Motor neuron (in vitro differentiated cells): ENCODE measurements at regions of chr2 and their contacts with region 1.

Region 1: DNA sequence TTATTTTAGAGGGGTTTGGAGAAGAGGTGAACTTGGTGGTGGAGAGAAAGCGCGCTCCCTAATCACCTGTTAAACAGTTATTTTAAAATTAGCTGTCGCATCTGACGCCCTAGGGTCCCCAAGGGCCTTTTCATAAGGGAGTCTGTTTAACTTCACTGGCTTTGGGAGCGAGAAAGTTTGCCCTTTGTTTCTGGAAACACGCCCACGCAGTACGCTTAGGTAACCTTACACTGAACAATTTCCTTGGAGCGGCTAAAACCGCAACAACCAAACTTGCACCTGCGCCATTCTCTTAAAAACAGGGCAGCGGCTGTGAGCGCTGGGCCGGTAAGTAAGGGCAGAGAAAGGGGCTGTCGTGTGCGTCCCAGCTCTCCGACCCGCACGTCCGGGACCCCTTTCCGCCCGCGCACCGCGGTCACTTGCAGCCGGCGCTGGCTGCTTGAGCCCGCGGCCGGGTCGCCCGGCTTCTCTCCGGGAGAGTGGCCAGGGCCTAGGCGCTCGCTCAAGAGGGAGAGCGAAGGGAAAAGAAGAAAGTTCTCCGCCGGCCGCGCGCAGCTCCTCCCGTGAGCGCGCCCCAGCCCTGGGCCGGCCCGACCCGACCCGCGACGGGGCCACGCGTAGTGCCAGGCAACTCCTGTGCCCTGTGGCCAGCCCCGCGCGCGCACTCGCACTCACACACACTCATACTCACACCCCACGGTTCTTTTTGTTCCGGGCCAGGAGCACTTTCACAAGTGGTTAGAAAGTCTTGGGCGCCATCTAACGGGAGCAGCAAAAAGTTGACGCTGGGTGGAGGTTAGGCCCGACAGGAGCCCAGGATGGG is 19.2 kb downstream of the POU3F3 start:
- ATAC-seq: peak; percentile 81 to 96 (median 86)
- H3K4me3 ChIP-seq: peak overlapping the region; percentile 38 to 84 (median 54)
- H3K27ac ChIP-seq: peak overlapping the region; percentile 32 to 49
- H3K4me1 ChIP-seq: peaks cover 5 to 11% of the 10 kb centered on the region in 2 donors

Region 2: DNA sequence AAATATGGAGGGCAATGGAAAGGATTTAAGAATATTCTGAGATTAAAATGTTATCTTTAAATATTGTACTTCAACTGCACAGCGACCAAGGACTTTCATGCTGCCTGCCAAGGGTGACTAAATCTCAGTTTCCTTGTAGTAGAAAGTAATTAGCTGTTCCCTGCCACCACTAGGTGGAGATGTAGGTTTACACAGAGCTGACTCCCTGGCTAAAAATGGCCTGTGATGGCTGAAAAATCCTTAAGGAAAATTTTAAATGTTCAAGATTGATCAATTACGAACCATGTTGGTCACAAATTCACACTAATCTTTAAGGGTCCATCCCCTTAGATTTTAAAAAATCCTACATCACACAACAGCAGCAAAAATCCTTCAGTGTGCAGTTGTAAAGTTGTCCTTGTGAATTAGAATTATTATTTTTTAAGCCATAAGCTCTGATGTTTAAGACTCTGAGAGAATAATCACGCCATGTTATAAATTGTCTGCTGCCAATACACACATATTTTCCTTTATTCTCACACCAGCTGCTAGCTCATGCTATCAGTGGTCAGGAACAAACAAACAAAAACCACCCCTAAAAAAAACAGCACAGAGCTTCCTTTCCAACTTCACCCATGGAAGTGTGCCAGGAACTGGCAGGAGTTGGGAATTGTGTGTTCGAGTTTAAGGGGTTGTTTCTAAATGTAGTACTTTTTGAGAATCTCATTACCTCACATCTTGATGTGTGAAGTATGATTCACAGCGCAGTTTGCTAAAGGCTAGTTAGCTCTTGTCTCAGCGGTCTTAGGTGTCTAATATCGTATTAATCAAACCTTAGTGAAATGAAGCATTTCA is 1711.4 kb before region 1 on chr2:
- in situ Hi-C with region 1: loop called in 5 of 9 experiments (anchors 25 kb)
- ATAC-seq: peak; percentile 53 to 81 (median 69)
- H3K4me3 ChIP-seq: no peak overlapping the region
- H3K27ac ChIP-seq: no peak overlapping the region
- H3K4me1 ChIP-seq: peaks cover 12 to 29% of the 10 kb centered on the region in 2 donors

Region 3: DNA sequence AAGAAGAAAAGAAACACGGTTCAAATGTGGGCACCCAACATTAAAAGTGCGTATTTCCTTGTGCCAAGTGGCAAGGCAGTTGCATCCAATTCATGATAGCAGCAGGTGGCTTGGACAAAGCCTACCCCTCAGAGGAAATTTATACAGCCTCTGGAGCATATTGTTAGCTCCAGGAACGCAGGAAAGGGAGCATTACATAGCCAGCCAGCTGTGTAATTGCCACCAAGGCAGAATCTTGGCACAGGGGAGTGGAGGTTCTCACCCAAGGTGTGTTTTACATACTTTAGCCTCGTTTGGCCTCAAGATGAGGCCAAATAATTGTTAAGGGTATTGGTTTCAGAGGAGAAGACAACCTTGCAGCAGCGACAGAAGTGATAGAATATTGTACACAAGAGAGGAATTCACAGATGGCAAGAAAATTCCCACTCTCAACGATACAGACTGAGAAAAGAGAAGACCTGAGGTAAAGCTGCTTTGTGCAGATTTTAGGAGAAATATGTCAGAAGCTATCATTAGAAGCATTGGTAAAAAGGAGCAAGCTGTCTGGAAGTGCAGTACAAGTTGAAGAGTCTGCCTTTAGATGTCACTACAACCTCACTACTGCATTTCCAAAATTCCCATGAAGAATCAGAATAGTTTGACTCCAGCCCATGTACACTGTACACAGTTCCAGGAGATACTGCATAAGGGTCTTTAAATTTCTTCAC is 1584.2 kb before region 1 on chr2:
- in situ Hi-C with region 1: loop called in 2 of 9 experiments (anchors 25 kb)
- ATAC-seq: peak in 6 of 8 experiments; percentile 48 to 97 (median 92)
- H3K4me3 ChIP-seq: no peak overlapping the region
- H3K27ac ChIP-seq: no peak overlapping the region
- H3K4me1 ChIP-seq: peaks cover 19 to 29% of the 10 kb centered on the region in 2 donors

Region 4: DNA sequence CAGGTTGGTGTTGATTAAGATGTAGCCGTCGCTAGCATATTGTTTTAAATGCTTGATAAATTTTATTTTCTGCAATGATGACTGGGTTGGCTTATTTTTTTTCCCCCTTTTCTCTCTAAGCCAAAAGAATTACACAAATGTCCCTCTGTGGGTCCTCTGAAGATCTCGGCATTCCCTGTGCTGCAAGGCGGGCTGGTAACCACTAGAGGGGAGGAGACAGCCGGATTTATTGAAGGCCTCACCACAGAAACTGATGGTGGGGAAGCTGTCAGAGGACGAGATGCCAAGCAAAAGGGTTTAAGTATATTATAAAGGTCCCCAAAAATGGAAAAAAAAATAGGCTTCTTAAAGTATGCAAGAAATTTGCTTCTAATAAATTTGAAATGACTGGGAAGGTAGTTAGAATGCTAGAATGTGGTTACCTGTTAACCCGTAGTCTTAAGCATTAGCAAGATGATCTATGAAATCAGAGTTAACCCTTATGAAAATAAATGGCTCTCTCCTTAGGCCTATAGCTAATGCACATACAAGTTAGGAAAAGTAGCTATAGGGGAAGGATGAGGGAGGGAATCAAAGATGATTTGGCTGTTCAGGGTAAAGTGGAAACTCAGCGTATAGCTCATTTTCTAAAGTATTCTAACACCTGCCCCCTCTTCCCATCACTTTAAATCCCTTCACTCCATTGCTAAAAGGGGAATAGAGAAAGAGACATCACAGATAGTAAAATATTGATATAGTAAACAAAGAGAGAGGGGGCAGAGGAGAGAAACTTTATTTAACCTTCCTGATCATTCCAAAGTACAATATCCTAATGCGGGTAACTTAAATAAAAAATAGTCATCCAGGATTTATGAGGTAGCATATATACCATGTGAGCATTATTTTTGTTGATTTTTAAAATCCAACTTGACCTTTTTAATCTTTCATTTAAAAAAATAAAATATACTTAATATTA is 913.6 kb before region 1 on chr2:
- in situ Hi-C with region 1: loop called in 2 of 9 experiments (anchors 25 kb)
- ATAC-seq: peak; percentile 29 to 98 (median 93)
- H3K4me3 ChIP-seq: no peak overlapping the region
- H3K27ac ChIP-seq: no peak overlapping the region
- H3K4me1 ChIP-seq: peaks cover 8 to 35% of the 10 kb centered on the region in 2 donors

Region 5: GRCh38 chr2:105235388-105236054 is 362.4 kb after region 1 on chr2:
- in situ Hi-C with region 1: no loop called
- ATAC-seq: peak; percentile 81 to 92 (median 87)
- H3K4me3 ChIP-seq: no peak overlapping the region
- H3K27ac ChIP-seq: no peak overlapping the region
- H3K4me1 ChIP-seq: peaks cover 7 to 8% of the 10 kb centered on the region in 2 donors